ENCODE measurements at regions of chr10 and their contacts with region 1.

Region 1: GRCh38 chr10:56449770-56450169 is 88.7 kb upstream of the ZWINT start:
- DNase-seq: peak; percentile 24
- H3K4me3 Mint-ChIP-seq: no peak overlapping the region
- H3K27ac Mint-ChIP-seq: no peak overlapping the region
- H3K4me1 Mint-ChIP-seq: no peaks in the 10 kb centered on the region
- H3K27me3 Mint-ChIP-seq: no peaks in the 10 kb centered on the region
- CTCF ChIP-seq: peak; percentile 32

Region 2: GRCh38 chr10:55989188-55989587 is 460.6 kb before region 1 on chr10:
- CTCF ChIA-PET with region 1: no interaction called
- POLR2A ChIA-PET with region 1: no interaction called
- intact Hi-C with region 1: loop called (anchors 10 kb)
- DNase-seq: no peak
- H3K4me3 Mint-ChIP-seq: no peak overlapping the region
- H3K27ac Mint-ChIP-seq: no peak overlapping the region
- H3K4me1 Mint-ChIP-seq: no peaks in the 10 kb centered on the region
- H3K27me3 Mint-ChIP-seq: peaks cover 29% of the 10 kb centered on the region
- CTCF ChIP-seq: no peak